Naive thymus-derived CD4-positive, alpha-beta T cell (primary cell): ENCODE measurements at regions of chr2 and their contacts with region 1.

Region 1: GRCh38 chr2:30503007-30503694 is 56.1 kb downstream of the LCLAT1 start:
- DNase-seq: peak in 6 of 9 donors; percentile 34 to 65 (median 54)
- ATAC-seq: peak; percentile 96
- H3K4me3 ChIP-seq: no peak overlapping the region
- H3K4me3 Mint-ChIP-seq: peak overlapping the region in 9 of 10 donors; percentile 23 to 76 (median 65)
- H3K27ac ChIP-seq: peak overlapping the region; percentile 49
- H3K27ac Mint-ChIP-seq: peak overlapping the region in 8 of 9 donors; percentile 79 to 92 (median 85)
- H3K4me1 ChIP-seq: peaks cover 18 to 28% of the 10 kb centered on the region in 2 donors
- H3K4me1 Mint-ChIP-seq: peaks cover 22 to 51% (median 46%) of the 10 kb centered on the region in 7 donors
- H3K27me3 ChIP-seq: no peaks in the 10 kb centered on the region
- H3K27me3 Mint-ChIP-seq: no peaks in the 10 kb centered on the region

Region 2: GRCh38 chr2:30178618-30179434 is 324.3 kb before region 1 on chr2:
- CTCF ChIA-PET with region 1: no interaction called
- POLR2A ChIA-PET with region 1: no interaction called
- intact Hi-C with region 1: no loop called
- DNase-seq: no peak
- ATAC-seq: peak; percentile 15
- H3K4me3 ChIP-seq: no peak overlapping the region
- H3K4me3 Mint-ChIP-seq: no peak overlapping the region
- H3K27ac ChIP-seq: no peak overlapping the region
- H3K27ac Mint-ChIP-seq: no peak overlapping the region
- H3K4me1 ChIP-seq: no peaks in the 10 kb centered on the region
- H3K4me1 Mint-ChIP-seq: peaks cover 0 to 6% (median 0%) of the 10 kb centered on the region in 7 donors
- H3K27me3 ChIP-seq: no peaks in the 10 kb centered on the region
- H3K27me3 Mint-ChIP-seq: peaks cover 0 to 10% (median 5%) of the 10 kb centered on the region in 5 donors

Region 3: GRCh38 chr2:30487603-30488002 is 15.5 kb before region 1 on chr2:
- CTCF ChIA-PET with region 1: no interaction called
- POLR2A ChIA-PET with region 1: interaction called, 4 read pairs
- intact Hi-C with region 1: loop called in 1 of 2 experiments (anchors 2 kb)
- DNase-seq: no peak
- ATAC-seq: no peak
- H3K4me3 ChIP-seq: no peak overlapping the region
- H3K4me3 Mint-ChIP-seq: peak overlapping the region in 2 of 10 donors; percentile 0 to 34
- H3K27ac ChIP-seq: no peak overlapping the region
- H3K27ac Mint-ChIP-seq: peak overlapping the region in 1 of 9 donors; percentile 67
- H3K4me1 ChIP-seq: peaks cover 0 to 26% of the 10 kb centered on the region in 2 donors
- H3K4me1 Mint-ChIP-seq: peaks cover 11 to 62% (median 39%) of the 10 kb centered on the region in 7 donors
- H3K27me3 ChIP-seq: no peaks in the 10 kb centered on the region
- H3K27me3 Mint-ChIP-seq: no peaks in the 10 kb centered on the region